ENCODE measurements at regions of chr18 and their contacts with region 1.

Region 1: GRCh38 chr18:1229634-1230033 is 325.0 kb downstream of the ADCYAP1 start:
- DNase-seq: no peak
- H3K4me3 ChIP-seq: no peak overlapping the region
- H3K4me3 Mint-ChIP-seq: no peak overlapping the region
- H3K27ac Mint-ChIP-seq: no peak overlapping the region
- H3K4me1 ChIP-seq: no peaks in the 10 kb centered on the region
- H3K4me1 Mint-ChIP-seq: no peaks in the 10 kb centered on the region
- H3K27me3 ChIP-seq: no peaks in the 10 kb centered on the region
- H3K27me3 Mint-ChIP-seq: no peaks in the 10 kb centered on the region
- CTCF ChIP-seq: no peak

Region 2: GRCh38 chr18:814300-815084 is 415.1 kb before region 1 on chr18:
- CTCF ChIA-PET with region 1: no interaction called
- POLR2A ChIA-PET with region 1: no interaction called
- intact Hi-C with region 1: no loop called
- DNase-seq: no peak
- H3K4me3 ChIP-seq: no peak overlapping the region
- H3K4me3 Mint-ChIP-seq: no peak overlapping the region
- H3K27ac Mint-ChIP-seq: no peak overlapping the region
- H3K4me1 ChIP-seq: 0 out of 2 replicates have a peak, but pooled peaks cover 4% of the 10 kb centered on the region
- H3K4me1 Mint-ChIP-seq: peaks cover 6% of the 10 kb centered on the region
- H3K27me3 ChIP-seq: no peaks in the 10 kb centered on the region
- H3K27me3 Mint-ChIP-seq: no peaks in the 10 kb centered on the region
- CTCF ChIP-seq: no peak

Region 3: GRCh38 chr18:1104181-1104881 is 125.3 kb before region 1 on chr18:
- CTCF ChIA-PET with region 1: no interaction called
- POLR2A ChIA-PET with region 1: no interaction called
- intact Hi-C with region 1: no loop called
- DNase-seq: no peak
- H3K4me3 ChIP-seq: no peak overlapping the region
- H3K4me3 Mint-ChIP-seq: no peak overlapping the region
- H3K27ac Mint-ChIP-seq: no peak overlapping the region
- H3K4me1 ChIP-seq: peaks cover 6% of the 10 kb centered on the region; the same call in 1 of the 2 replicates
- H3K4me1 Mint-ChIP-seq: no peaks in the 10 kb centered on the region
- H3K27me3 ChIP-seq: no peaks in the 10 kb centered on the region
- H3K27me3 Mint-ChIP-seq: no peaks in the 10 kb centered on the region
- CTCF ChIP-seq: no peak

Region 4: GRCh38 chr18:1253827-1254226 is 24.2 kb after region 1 on chr18:
- CTCF ChIA-PET with region 1: no interaction called
- POLR2A ChIA-PET with region 1: no interaction called
- intact Hi-C with region 1: loop called (anchors 1 kb)
- DNase-seq: no peak
- H3K4me3 ChIP-seq: no peak overlapping the region
- H3K4me3 Mint-ChIP-seq: no peak overlapping the region
- H3K27ac Mint-ChIP-seq: no peak overlapping the region
- H3K4me1 ChIP-seq: no peaks in the 10 kb centered on the region
- H3K4me1 Mint-ChIP-seq: no peaks in the 10 kb centered on the region
- H3K27me3 ChIP-seq: no peaks in the 10 kb centered on the region
- H3K27me3 Mint-ChIP-seq: no peaks in the 10 kb centered on the region
- CTCF ChIP-seq: no peak

Region 5: GRCh38 chr18:1361936-1362335 is 132.3 kb after region 1 on chr18:
- CTCF ChIA-PET with region 1: no interaction called
- POLR2A ChIA-PET with region 1: no interaction called
- intact Hi-C with region 1: no loop called
- DNase-seq: no peak
- H3K4me3 ChIP-seq: no peak overlapping the region
- H3K4me3 Mint-ChIP-seq: no peak overlapping the region
- H3K27ac Mint-ChIP-seq: no peak overlapping the region
- H3K4me1 ChIP-seq: no peaks in the 10 kb centered on the region
- H3K4me1 Mint-ChIP-seq: no peaks in the 10 kb centered on the region
- H3K27me3 ChIP-seq: no peaks in the 10 kb centered on the region
- H3K27me3 Mint-ChIP-seq: peaks cover 2% of the 10 kb centered on the region
- CTCF ChIP-seq: no peak

Measured in Caco-2 (cell line).